AG04450 (cell line): ENCODE measurements at regions of chr1 and their contacts with region 1.

Region 1: DNA sequence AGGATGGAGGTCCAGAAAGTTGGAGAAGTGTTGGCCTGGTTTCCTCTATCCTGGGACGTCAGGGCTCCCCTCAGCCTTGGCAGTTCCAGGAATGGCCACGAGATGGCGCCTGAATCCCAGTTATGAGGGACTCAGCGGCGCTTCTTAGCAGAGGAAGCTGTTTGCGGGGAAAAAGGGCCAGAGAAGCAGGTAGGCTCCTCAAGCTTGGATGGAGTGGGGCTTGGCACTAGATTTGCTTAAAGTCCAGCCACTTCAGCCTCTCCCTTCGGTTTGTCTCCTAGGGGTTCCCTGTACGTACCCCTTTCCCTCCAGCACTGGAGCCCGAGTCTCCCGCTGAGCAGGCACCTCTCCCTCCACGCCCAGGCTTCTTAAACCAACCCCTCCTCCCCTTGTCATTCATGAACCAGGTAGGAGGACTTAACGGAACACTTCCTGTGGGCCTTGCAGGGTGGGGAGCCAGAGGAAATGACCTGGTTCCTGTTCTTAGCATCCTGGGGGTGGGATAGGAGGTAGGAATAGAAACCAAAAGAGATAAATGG is 32.0 kb upstream of the TENT5B start:
- DNase-seq: peak; percentile 26
- H3K4me3 ChIP-seq: no peak overlapping the region
- H3K27ac ChIP-seq: no peak overlapping the region
- H3K27me3 ChIP-seq: no peaks in the 10 kb centered on the region
- CTCF ChIP-seq: peak; percentile 98

Region 2: DNA sequence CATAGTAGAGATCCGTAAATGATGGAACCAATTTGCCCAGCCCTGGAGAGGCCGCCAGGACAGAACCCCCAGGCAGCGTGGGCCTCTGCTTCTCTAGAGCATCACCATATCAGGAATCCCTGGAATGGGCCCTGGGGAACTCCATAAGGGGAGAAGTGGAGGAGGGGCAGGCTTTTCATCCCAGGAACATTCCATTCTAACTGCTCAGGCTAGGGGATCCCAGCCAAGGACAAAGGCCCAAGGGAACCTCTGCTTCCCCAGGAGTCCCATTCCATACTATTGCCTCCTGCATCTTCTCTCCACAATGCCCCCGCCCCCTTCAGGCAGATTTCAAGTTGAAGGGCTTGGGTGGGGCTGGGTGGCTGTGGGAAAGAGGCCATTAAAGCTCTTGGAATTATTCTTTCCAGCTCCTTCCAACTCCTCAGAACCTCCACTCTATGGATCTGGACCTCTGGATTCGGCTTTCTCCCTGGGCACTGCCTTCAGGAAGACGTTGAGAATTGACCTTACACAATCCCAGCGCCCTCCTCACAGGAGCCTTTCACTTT is 45.2 kb before region 1 on chr1:
- CTCF ChIA-PET with region 1: interaction called, 65 read pairs
- POLR2A ChIA-PET with region 1: interaction called, 8 read pairs
- DNase-seq: peak; percentile 95
- H3K4me3 ChIP-seq: no peak overlapping the region
- H3K27ac ChIP-seq: peak overlapping the region; percentile 95
- H3K27me3 ChIP-seq: no peaks in the 10 kb centered on the region
- CTCF ChIP-seq: 0 out of 2 replicates have a peak, but pooled peaks have one; percentile 1

Region 3: DNA sequence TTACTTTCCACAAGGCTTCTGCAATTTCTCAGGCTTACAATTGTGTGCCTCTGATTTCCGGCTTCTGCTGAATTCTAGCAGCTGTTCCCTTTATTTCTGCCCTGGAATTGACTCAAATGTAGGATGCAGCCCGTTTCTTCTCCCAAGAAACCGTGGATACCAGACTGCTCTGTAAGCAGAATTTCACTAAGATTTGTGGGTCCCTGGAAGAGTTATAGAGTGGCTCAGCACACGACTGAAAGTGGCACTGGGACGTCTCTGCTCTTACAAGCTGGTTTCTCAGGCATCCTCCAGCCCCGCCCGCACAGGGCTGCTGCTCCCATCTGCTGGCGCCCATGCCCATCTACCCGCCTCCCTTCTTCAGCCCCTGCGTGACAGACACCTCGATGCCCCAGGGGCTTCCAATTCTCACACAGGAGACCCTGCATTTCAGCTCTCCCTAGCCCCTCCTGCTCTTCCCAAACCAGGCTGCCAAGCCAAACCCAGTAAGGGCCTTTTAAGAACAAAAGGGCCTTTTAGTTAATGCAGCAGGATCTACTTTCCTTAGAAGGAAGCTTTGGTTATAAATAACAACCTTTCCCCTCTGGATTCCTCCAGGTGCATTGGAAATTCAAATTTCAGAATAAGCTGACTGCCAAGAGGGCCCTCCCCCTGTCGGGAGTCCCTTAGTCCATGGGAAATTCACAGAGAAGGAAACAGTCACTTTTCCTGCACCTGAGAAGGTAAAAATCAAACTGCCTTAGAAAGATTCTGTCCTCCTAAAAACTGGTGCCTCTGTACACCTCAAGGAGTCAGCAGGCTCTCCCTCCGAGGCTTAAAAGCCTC is 13.3 kb after region 1 on chr1:
- CTCF ChIA-PET with region 1: interaction called, 89 read pairs
- POLR2A ChIA-PET with region 1: interaction called, 6 read pairs
- DNase-seq: no peak
- H3K4me3 ChIP-seq: no peak overlapping the region
- H3K27ac ChIP-seq: no peak overlapping the region
- H3K27me3 ChIP-seq: peaks cover 12% of the 10 kb centered on the region
- CTCF ChIP-seq: no peak

Region 4: GRCh38 chr1:27087371-27088220 is 42.9 kb after region 1 on chr1:
- CTCF ChIA-PET with region 1: interaction called, 348 read pairs
- POLR2A ChIA-PET with region 1: no interaction called
- DNase-seq: no peak
- H3K4me3 ChIP-seq: no peak overlapping the region
- H3K27ac ChIP-seq: no peak overlapping the region
- H3K27me3 ChIP-seq: peaks cover 15% of the 10 kb centered on the region
- CTCF ChIP-seq: no peak

Region 5: GRCh38 chr1:27284425-27285273 is 240.0 kb after region 1 on chr1:
- CTCF ChIA-PET with region 1: interaction called, 26 read pairs
- POLR2A ChIA-PET with region 1: no interaction called
- DNase-seq: peak; percentile 53
- H3K4me3 ChIP-seq: no peak overlapping the region
- H3K27ac ChIP-seq: no peak overlapping the region
- H3K27me3 ChIP-seq: no peaks in the 10 kb centered on the region
- CTCF ChIP-seq: peak; percentile 82

Region 6: GRCh38 chr1:28893403-28894102 is 1848.9 kb after region 1 on chr1:
- CTCF ChIA-PET with region 1: no interaction called
- POLR2A ChIA-PET with region 1: interaction called, 10 read pairs
- DNase-seq: no peak
- H3K4me3 ChIP-seq: no peak overlapping the region
- H3K27ac ChIP-seq: no peak overlapping the region
- H3K27me3 ChIP-seq: peaks cover 7% of the 10 kb centered on the region
- CTCF ChIP-seq: peak; percentile 45